PC-3 (cell line): ENCODE measurements at regions of chr12 and their contacts with region 1.

Region 1: GRCh38 chr12:29569132-29569757 is 71.8 kb upstream of the OVCH1 start:
- DNase-seq: peak; percentile 44
- ATAC-seq: no peak
- H3K4me3 ChIP-seq: no peak overlapping the region
- H3K27ac ChIP-seq: no peak overlapping the region
- H3K4me1 ChIP-seq: peaks cover 24% of the 10 kb centered on the region
- H3K27me3 ChIP-seq: no peaks in the 10 kb centered on the region
- CTCF ChIP-seq: no peak

Region 2: GRCh38 chr12:29427964-29428363 is 141.3 kb before region 1 on chr12:
- CTCF ChIA-PET with region 1: no interaction called
- POLR2A ChIA-PET with region 1: no interaction called
- intact Hi-C with region 1: loop called (anchors 5 kb)
- DNase-seq: peak; percentile 53
- ATAC-seq: peak; percentile 6; the same call in 1 of the 2 replicates
- H3K4me3 ChIP-seq: no peak overlapping the region
- H3K27ac ChIP-seq: peak overlapping the region; percentile 28
- H3K4me1 ChIP-seq: peaks cover 56% of the 10 kb centered on the region
- H3K27me3 ChIP-seq: no peaks in the 10 kb centered on the region
- CTCF ChIP-seq: peak; percentile 56

Region 3: GRCh38 chr12:29534935-29535334 is 34.3 kb before region 1 on chr12:
- CTCF ChIA-PET with region 1: no interaction called
- POLR2A ChIA-PET with region 1: no interaction called
- intact Hi-C with region 1: no loop called
- DNase-seq: no peak
- ATAC-seq: no peak
- H3K4me3 ChIP-seq: no peak overlapping the region
- H3K27ac ChIP-seq: no peak overlapping the region
- H3K4me1 ChIP-seq: peaks cover 5% of the 10 kb centered on the region; the same call in 1 of the 2 replicates
- H3K27me3 ChIP-seq: peaks cover 18% of the 10 kb centered on the region
- CTCF ChIP-seq: no peak

Region 4: DNA sequence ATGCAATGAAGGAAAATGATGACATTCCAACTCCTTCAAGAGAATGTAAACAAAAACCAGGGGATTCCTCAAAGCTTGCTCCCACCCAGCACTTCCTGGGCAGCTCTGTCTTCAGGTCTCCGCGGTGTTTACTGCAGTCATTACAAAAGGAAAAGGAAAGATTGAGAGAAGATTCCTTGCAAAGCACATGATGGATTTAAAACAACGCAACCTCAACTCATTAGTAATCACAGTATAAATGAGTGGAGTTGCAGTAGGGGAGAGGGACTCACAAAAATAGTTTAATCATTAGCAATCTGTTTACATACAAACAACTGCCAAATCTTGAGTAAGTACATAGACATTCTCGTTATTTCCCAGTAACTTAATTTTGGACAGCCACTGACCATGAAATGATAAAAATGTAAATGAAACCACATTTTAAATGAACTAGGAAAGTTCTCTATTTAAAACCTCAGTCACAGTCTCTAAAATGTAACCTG is 22.1 kb before region 1 on chr12:
- CTCF ChIA-PET with region 1: interaction called, 4 read pairs
- POLR2A ChIA-PET with region 1: no interaction called
- intact Hi-C with region 1: loop called (anchors 1 kb)
- DNase-seq: peak; percentile 78
- ATAC-seq: peak; percentile 87
- H3K4me3 ChIP-seq: peak overlapping the region; percentile 13; the same call in 1 of the 2 replicates
- H3K27ac ChIP-seq: peak overlapping the region; percentile 4
- H3K4me1 ChIP-seq: peaks cover 19% of the 10 kb centered on the region
- H3K27me3 ChIP-seq: no peaks in the 10 kb centered on the region
- CTCF ChIP-seq: no peak

Region 5: DNA sequence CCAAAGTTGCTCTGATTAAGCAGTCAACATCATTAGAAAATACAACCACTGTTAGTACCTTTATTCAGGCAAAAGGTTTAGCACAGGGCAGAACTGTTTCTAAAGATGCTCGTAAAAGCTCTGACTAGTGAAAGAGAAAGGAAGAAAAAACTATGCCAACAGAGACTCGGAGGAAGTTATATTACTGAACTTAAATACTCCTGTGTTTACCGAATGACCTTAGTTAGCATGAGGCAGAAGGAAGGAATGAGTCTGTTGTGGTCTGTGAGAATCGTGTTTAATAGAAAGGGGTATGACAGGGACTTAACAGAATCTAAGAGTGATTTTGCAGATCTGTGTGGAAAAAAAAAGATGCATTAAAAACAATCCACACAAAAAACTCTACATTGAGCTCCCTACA is 12.4 kb after region 1 on chr12:
- CTCF ChIA-PET with region 1: no interaction called
- POLR2A ChIA-PET with region 1: interaction called, 3 read pairs
- intact Hi-C with region 1: loop called (anchors 1 kb)
- DNase-seq: peak; percentile 91
- ATAC-seq: peak; percentile 87
- H3K4me3 ChIP-seq: peak overlapping the region; percentile 47; the same call in 1 of the 2 replicates
- H3K27ac ChIP-seq: peak overlapping the region; percentile 87
- H3K4me1 ChIP-seq: peaks cover 52% of the 10 kb centered on the region
- H3K27me3 ChIP-seq: no peaks in the 10 kb centered on the region
- CTCF ChIP-seq: no peak

Region 6: GRCh38 chr12:29739279-29739991 is 170.2 kb after region 1 on chr12:
- CTCF ChIA-PET with region 1: no interaction called
- POLR2A ChIA-PET with region 1: no interaction called
- intact Hi-C with region 1: no loop called
- DNase-seq: no peak
- ATAC-seq: no peak
- H3K4me3 ChIP-seq: no peak overlapping the region
- H3K27ac ChIP-seq: no peak overlapping the region
- H3K4me1 ChIP-seq: no peaks in the 10 kb centered on the region
- H3K27me3 ChIP-seq: 0 out of 2 replicates have a peak, but pooled peaks cover 3% of the 10 kb centered on the region
- CTCF ChIP-seq: no peak

Region 7: GRCh38 chr12:29750131-29750927 is 181.1 kb after region 1 on chr12:
- CTCF ChIA-PET with region 1: no interaction called
- POLR2A ChIA-PET with region 1: no interaction called
- intact Hi-C with region 1: no loop called
- DNase-seq: no peak
- ATAC-seq: no peak
- H3K4me3 ChIP-seq: no peak overlapping the region
- H3K27ac ChIP-seq: no peak overlapping the region
- H3K4me1 ChIP-seq: no peaks in the 10 kb centered on the region
- H3K27me3 ChIP-seq: peaks cover 9% of the 10 kb centered on the region; the same call in 1 of the 2 replicates
- CTCF ChIP-seq: no peak

Region 8: GRCh38 chr12:29796823-29797263 is 227.6 kb after region 1 on chr12:
- CTCF ChIA-PET with region 1: no interaction called
- POLR2A ChIA-PET with region 1: no interaction called
- intact Hi-C with region 1: loop called (anchors 5 kb)
- DNase-seq: peak; percentile 98
- ATAC-seq: peak; percentile 99
- H3K4me3 ChIP-seq: peak overlapping the region; percentile 14; the same call in 1 of the 2 replicates
- H3K27ac ChIP-seq: peak overlapping the region; percentile 29
- H3K4me1 ChIP-seq: peaks cover 24% of the 10 kb centered on the region
- H3K27me3 ChIP-seq: peaks cover 13% of the 10 kb centered on the region; the same call in 1 of the 2 replicates
- CTCF ChIP-seq: no peak